ENCODE measurements at regions of chr10 and their contacts with region 1.

Region 1: GRCh38 chr10:3785257-3785850 is 345 bp upstream of the KLF6 start:
- DNase-seq: peak; percentile 99
- ATAC-seq: peak; percentile 76
- H3K4me3 Mint-ChIP-seq: peak overlapping the region; percentile 92
- H3K27ac Mint-ChIP-seq: peak overlapping the region; percentile 99
- H3K4me1 Mint-ChIP-seq: peaks cover 39% of the 10 kb centered on the region
- H3K27me3 Mint-ChIP-seq: no peaks in the 10 kb centered on the region

Region 2: GRCh38 chr10:3734111-3734510 is 51.2 kb before region 1 on chr10:
- POLR2A ChIA-PET with region 1: no interaction called
- DNase-seq: no peak
- ATAC-seq: no peak
- H3K4me3 Mint-ChIP-seq: no peak overlapping the region
- H3K27ac Mint-ChIP-seq: peak overlapping the region; percentile 12
- H3K4me1 Mint-ChIP-seq: peaks cover 1% of the 10 kb centered on the region
- H3K27me3 Mint-ChIP-seq: no peaks in the 10 kb centered on the region

Region 3: GRCh38 chr10:3763035-3763456 is 22.3 kb before region 1 on chr10:
- POLR2A ChIA-PET with region 1: interaction called, 42 read pairs
- DNase-seq: no peak
- ATAC-seq: no peak
- H3K4me3 Mint-ChIP-seq: no peak overlapping the region
- H3K27ac Mint-ChIP-seq: no peak overlapping the region
- H3K4me1 Mint-ChIP-seq: peaks cover 48% of the 10 kb centered on the region
- H3K27me3 Mint-ChIP-seq: no peaks in the 10 kb centered on the region

Region 4: GRCh38 chr10:3828404-3829155 is 43.2 kb after region 1 on chr10:
- POLR2A ChIA-PET with region 1: interaction called, 51 read pairs
- DNase-seq: no peak
- ATAC-seq: peak; percentile 57
- H3K4me3 Mint-ChIP-seq: peak overlapping the region; percentile 69
- H3K27ac Mint-ChIP-seq: peak overlapping the region; percentile 91
- H3K4me1 Mint-ChIP-seq: peaks cover 40% of the 10 kb centered on the region
- H3K27me3 Mint-ChIP-seq: no peaks in the 10 kb centered on the region

Region 5: GRCh38 chr10:3873728-3874461 is 88.5 kb after region 1 on chr10:
- POLR2A ChIA-PET with region 1: interaction called, 24 read pairs
- DNase-seq: no peak
- ATAC-seq: no peak
- H3K4me3 Mint-ChIP-seq: no peak overlapping the region
- H3K27ac Mint-ChIP-seq: peak overlapping the region; percentile 28
- H3K4me1 Mint-ChIP-seq: peaks cover 40% of the 10 kb centered on the region
- H3K27me3 Mint-ChIP-seq: no peaks in the 10 kb centered on the region

Region 6: GRCh38 chr10:3955493-3955892 is 170.1 kb after region 1 on chr10:
- POLR2A ChIA-PET with region 1: interaction called, 258 read pairs
- DNase-seq: no peak
- ATAC-seq: no peak
- H3K4me3 Mint-ChIP-seq: no peak overlapping the region
- H3K27ac Mint-ChIP-seq: no peak overlapping the region
- H3K4me1 Mint-ChIP-seq: peaks cover 52% of the 10 kb centered on the region
- H3K27me3 Mint-ChIP-seq: no peaks in the 10 kb centered on the region

Region 7: GRCh38 chr10:3980660-3981059 is 195.3 kb after region 1 on chr10:
- POLR2A ChIA-PET with region 1: interaction called, 103 read pairs
- DNase-seq: no peak
- ATAC-seq: peak; percentile 44
- H3K4me3 Mint-ChIP-seq: peak overlapping the region; percentile 48
- H3K27ac Mint-ChIP-seq: peak overlapping the region; percentile 89
- H3K4me1 Mint-ChIP-seq: peaks cover 34% of the 10 kb centered on the region
- H3K27me3 Mint-ChIP-seq: no peaks in the 10 kb centered on the region